Common myeloid progenitor, CD34-positive (primary cell): ENCODE measurements at regions of chr6 and their contacts with region 1.

Region 1: DNA sequence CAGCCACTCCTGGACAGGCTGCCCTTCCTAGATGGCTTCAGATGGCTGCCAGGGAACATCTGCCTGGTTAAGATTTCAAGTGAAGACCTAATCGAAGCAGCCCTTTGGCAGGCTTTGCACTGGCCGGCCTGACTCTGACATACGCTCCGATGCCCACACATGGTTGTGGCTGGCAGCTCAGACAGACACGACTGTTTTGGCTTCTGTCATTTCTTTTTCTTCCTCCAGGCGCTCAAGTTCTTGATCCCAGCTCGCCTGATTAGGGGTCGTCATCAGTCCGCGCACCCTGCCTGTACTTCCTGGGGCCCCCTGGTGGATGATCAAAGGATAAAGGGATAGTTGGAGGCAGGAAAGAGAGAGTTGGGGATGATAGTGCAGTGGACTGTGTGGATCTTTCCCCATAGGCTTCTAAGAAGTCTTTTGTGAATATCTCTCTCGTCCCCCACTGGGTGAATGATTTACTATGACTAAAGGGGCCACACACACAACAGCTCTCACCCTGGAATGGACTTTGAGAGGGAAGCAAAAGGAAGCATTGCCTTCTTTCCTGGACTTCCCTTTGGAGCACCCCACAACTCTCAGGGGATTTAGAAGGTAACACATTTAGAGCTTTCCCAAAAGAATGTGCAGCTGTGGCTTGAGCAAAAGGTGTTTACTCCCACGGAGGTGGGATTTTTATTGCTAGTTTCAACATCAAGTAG is 21.4 kb upstream of the TRAM2 start:
- DNase-seq: peak; percentile 80 to 89 (median 86)
- H3K4me3 ChIP-seq: no peak overlapping the region
- H3K27ac ChIP-seq: no peak overlapping the region
- H3K4me1 ChIP-seq: peaks cover 0 to 14% (median 7%) of the 10 kb centered on the region in 4 experiments
- H3K27me3 ChIP-seq: no peaks in the 10 kb centered on the region

Region 2: GRCh38 chr6:52389626-52390360 is 208.5 kb before region 1 on chr6:
- CTCF ChIA-PET with region 1: interaction called, 10 read pairs
- POLR2A ChIA-PET with region 1: no interaction called
- DNase-seq: peak; percentile 52 to 79 (median 70)
- H3K4me3 ChIP-seq: peak overlapping the region in 5 of 7 experiments; percentile 30 to 59 (median 46)
- H3K27ac ChIP-seq: peak overlapping the region; percentile 70 to 81
- H3K4me1 ChIP-seq: peaks cover 13 to 35% (median 27%) of the 10 kb centered on the region in 4 experiments
- H3K27me3 ChIP-seq: no peaks in the 10 kb centered on the region

Region 3: DNA sequence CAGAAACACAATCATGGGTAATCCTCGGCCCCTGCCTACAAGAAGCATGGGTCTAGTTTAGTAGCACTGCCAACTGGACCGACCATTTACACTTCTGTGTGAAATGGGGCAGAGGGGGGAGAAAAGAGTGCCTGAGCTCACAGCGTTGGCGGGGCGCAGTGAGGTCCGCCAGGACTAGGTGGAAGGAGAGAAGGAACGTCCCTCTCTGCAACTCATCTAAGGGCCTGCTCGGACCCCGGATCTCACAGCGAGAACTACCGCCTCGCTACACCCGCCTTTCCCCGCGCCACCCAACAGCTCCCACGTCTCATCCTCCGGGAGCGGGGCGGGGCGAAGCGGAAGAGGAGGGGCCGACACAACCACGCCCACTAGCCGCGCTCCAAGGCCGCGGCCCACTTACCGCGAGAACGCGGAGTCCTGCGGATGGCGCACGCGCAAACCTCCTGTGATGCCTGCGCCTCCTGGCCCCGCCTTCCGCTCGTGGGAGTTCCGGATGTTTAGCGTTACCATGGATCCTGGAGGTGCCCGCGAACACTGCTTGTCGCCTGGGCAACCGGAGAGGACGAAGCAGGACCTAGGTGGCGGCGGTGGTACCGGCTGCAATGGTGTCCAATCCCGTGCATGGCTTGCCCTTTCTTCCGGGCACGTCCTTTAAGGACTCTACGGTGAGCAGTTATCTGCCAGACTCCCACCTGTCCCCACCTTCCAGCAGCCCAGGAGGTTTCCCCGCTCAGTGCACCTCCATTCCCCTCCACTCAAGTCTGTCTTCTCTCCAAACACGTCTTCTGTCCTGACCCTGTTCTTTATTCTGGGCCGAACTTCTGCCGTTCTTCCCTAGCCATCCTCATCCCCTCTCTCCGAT is 178.2 kb before region 1 on chr6 and contains the start of gene EFHC1:
- CTCF ChIA-PET with region 1: interaction called, 31 read pairs
- POLR2A ChIA-PET with region 1: no interaction called
- DNase-seq: peak; percentile 97 to 98 (median 97)
- H3K4me3 ChIP-seq: peak within 1 kb of the TSS; percentile 76 to 99 (median 87)
- H3K27ac ChIP-seq: peak within 1 kb of the TSS; percentile 69 to 91
- H3K4me1 ChIP-seq: peaks cover 12 to 55% (median 29%) of the 10 kb centered on the region in 4 experiments
- H3K27me3 ChIP-seq: no peaks in the 10 kb centered on the region

Region 4: DNA sequence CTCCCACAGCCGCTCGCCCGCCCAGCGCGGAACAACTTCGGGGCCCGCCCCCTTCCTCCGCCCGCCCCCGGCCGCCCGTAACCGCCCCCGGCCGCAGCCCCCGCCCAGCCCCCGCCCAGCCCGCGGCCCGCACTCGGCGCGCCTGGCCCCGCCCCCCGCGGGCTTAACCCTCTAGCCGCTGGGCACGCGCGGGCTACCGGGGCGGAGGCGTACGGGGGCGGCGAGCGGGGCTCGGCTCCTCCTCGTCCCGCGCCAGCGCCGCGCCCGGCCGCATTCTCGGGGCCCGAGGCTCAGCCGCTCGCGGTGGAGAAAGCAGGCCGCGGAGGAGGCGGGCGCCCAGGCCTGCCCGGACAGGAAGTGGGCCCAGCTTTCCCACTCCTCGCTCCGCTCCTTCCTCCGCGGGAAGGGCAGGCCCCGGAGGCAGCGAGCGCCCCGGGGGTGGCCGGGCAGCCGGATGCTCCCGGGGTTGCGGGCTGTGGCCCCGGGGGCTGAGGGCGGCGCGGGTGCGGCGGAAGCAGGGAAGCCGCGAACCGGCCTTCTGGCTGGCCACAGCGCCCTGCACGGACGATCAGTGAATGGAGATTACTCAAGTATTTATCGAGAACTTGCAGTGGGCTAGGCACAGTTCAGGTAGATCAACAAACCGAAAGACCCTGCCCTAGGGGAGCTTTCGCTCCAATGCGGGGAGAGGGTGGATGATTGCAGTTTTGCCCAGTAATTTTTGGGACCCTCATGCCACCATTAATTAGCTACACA is 21.1 kb before region 1 on chr6 and contains the start of gene TRAM2:
- CTCF ChIA-PET with region 1: interaction called, 23 read pairs
- POLR2A ChIA-PET with region 1: interaction called, 5 read pairs
- DNase-seq: peak; percentile 80 to 88 (median 86)
- H3K4me3 ChIP-seq: peak within 1 kb of the TSS; percentile 70 to 88 (median 81)
- H3K27ac ChIP-seq: peak within 1 kb of the TSS; percentile 58 to 82
- H3K4me1 ChIP-seq: peaks cover 10 to 52% (median 36%) of the 10 kb centered on the region in 4 experiments
- H3K27me3 ChIP-seq: no peaks in the 10 kb centered on the region

Region 5: DNA sequence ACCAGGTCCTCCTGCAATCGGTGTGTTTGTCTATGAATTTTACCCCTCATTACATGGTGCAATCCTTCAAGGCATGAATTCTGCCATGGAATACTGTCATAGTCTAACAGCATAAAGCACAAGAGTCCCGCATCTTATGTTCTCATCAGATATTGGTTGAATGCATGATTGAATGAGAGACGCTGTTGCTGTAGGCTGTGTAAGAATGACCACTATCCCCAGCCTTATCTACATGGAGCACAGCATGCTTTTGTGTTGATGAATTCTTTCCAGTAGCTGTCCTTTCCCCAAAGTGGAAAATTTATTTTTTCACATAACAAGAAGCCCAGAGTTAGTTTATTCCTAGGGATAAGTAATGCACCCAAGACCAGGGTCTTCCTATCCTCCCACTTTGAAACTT is 15.8 kb before region 1 on chr6:
- CTCF ChIA-PET with region 1: interaction called, 18 read pairs
- POLR2A ChIA-PET with region 1: interaction called, 5 read pairs
- DNase-seq: no peak
- H3K4me3 ChIP-seq: no peak overlapping the region
- H3K27ac ChIP-seq: no peak overlapping the region
- H3K4me1 ChIP-seq: peaks cover 2 to 10% (median 7%) of the 10 kb centered on the region in 4 experiments
- H3K27me3 ChIP-seq: no peaks in the 10 kb centered on the region

Region 6: DNA sequence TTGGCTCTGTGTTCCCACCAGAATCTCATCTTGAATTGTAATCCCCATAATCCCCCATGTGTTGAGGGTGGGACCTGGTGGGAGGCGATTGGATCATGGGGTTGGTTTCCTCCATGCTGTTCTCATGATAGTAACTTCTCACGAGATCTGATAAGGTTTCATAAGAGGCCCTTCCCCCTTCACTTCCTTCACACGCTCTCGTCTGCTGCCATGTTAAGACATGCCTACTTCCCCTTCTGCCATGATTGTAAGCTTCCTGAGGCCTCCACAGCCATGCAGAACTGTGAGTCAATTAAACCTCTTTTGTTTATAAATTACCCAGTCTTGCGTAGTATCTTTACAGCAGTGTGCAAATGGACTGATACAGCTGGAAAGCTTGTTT is 660.5 kb after region 1 on chr6:
- CTCF ChIA-PET with region 1: no interaction called
- POLR2A ChIA-PET with region 1: no interaction called
- DNase-seq: no peak
- H3K4me3 ChIP-seq: no peak overlapping the region
- H3K27ac ChIP-seq: no peak overlapping the region
- H3K4me1 ChIP-seq: no peaks in the 10 kb centered on the region
- H3K27me3 ChIP-seq: no peaks in the 10 kb centered on the region